Activated CD4-positive, alpha-beta T cell treated with anti-CD3 and anti-CD28 coated beads for 36 hours (primary cell): ENCODE measurements at regions of chr15 and their contacts with region 1.

Region 1: DNA sequence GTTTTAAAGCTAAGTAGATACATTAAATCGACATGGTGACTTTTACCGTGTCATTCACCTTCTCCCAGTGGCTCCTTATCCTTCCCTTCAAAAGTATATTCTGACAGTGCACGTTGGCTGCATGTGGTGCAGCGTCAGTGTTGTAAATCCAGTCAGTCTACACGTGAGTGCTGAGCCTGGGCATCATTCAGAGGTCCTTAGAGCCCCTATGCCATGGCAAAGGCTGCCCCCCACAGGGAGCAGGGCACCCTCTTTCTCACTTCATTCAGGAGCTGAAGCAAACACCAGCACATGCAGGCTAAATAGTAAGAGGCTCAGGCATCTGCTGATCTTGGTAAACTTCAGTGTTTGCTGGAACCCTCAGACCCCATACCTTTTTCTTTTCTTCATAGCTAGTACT is 43.3 kb downstream of the RASGRP1 start:
- DNase-seq: no peak
- ATAC-seq: peak; percentile 20
- H3K4me3 Mint-ChIP-seq: no peak overlapping the region
- H3K27ac Mint-ChIP-seq: peak overlapping the region; percentile 76
- H3K4me1 Mint-ChIP-seq: peaks cover 73% of the 10 kb centered on the region
- H3K27me3 Mint-ChIP-seq: no peaks in the 10 kb centered on the region

Region 2: GRCh38 chr15:38496151-38496550 is 25.2 kb before region 1 on chr15:
- CTCF ChIA-PET with region 1: interaction called, 4 read pairs
- POLR2A ChIA-PET with region 1: no interaction called
- intact Hi-C with region 1: loop called in 1 of 2 experiments (anchors 2 kb)
- DNase-seq: no peak
- ATAC-seq: no peak
- H3K4me3 Mint-ChIP-seq: no peak overlapping the region
- H3K27ac Mint-ChIP-seq: peak overlapping the region; percentile 77
- H3K4me1 Mint-ChIP-seq: peaks cover 34% of the 10 kb centered on the region
- H3K27me3 Mint-ChIP-seq: no peaks in the 10 kb centered on the region

Region 3: GRCh38 chr15:38554354-38554753 is 33.0 kb after region 1 on chr15:
- CTCF ChIA-PET with region 1: interaction called, 4 read pairs
- POLR2A ChIA-PET with region 1: no interaction called
- intact Hi-C with region 1: loop called in 1 of 2 experiments (anchors 5 kb)
- DNase-seq: peak; percentile 73
- ATAC-seq: peak; percentile 74
- H3K4me3 Mint-ChIP-seq: no peak overlapping the region
- H3K27ac Mint-ChIP-seq: peak overlapping the region; percentile 91
- H3K4me1 Mint-ChIP-seq: peaks cover 89% of the 10 kb centered on the region
- H3K27me3 Mint-ChIP-seq: no peaks in the 10 kb centered on the region